Naive thymus-derived CD8-positive, alpha-beta T cell (primary cell): ENCODE measurements at regions of chr10 and their contacts with region 1.

Region 1: GRCh38 chr10:110918643-110919363 is at the start of gene BBIP1:
- DNase-seq: peak in 1 of 10 donors; percentile 89
- ATAC-seq: peak; percentile 89 to 94
- H3K4me3 Mint-ChIP-seq: peak within 1 kb of the TSS; percentile 89 to 100 (median 98)
- H3K27ac Mint-ChIP-seq: peak within 1 kb of the TSS; percentile 99 to 100 (median 100)
- H3K4me1 Mint-ChIP-seq: peaks cover 12 to 60% (median 45%) of the 10 kb centered on the region in 4 donors
- H3K27me3 Mint-ChIP-seq: no peaks in the 10 kb centered on the region
- polyA plus RNA-seq, gene BBIP1: 25.1 to 29.7 (median 29.0) TPM

Region 2: GRCh38 chr10:110871298-110872084 is 47.3 kb before region 1 on chr10 and contains the start of gene PDCD4:
- POLR2A ChIA-PET with region 1: interaction called, 24 read pairs
- DNase-seq: peak; percentile 90 to 95 (median 92)
- ATAC-seq: peak; percentile 60 to 67
- H3K4me3 Mint-ChIP-seq: peak within 1 kb of the TSS; percentile 79 to 99 (median 96)
- H3K27ac Mint-ChIP-seq: peak within 1 kb of the TSS; percentile 97 to 100 (median 99)
- H3K4me1 Mint-ChIP-seq: peaks cover 34 to 81% (median 65%) of the 10 kb centered on the region in 4 donors
- H3K27me3 Mint-ChIP-seq: no peaks in the 10 kb centered on the region
- polyA plus RNA-seq, gene PDCD4: 318 to 385 (median 341) TPM